CD4-positive, alpha-beta T cell (primary cell): ENCODE measurements at regions of chr14 and their contacts with region 1.

Region 1: DNA sequence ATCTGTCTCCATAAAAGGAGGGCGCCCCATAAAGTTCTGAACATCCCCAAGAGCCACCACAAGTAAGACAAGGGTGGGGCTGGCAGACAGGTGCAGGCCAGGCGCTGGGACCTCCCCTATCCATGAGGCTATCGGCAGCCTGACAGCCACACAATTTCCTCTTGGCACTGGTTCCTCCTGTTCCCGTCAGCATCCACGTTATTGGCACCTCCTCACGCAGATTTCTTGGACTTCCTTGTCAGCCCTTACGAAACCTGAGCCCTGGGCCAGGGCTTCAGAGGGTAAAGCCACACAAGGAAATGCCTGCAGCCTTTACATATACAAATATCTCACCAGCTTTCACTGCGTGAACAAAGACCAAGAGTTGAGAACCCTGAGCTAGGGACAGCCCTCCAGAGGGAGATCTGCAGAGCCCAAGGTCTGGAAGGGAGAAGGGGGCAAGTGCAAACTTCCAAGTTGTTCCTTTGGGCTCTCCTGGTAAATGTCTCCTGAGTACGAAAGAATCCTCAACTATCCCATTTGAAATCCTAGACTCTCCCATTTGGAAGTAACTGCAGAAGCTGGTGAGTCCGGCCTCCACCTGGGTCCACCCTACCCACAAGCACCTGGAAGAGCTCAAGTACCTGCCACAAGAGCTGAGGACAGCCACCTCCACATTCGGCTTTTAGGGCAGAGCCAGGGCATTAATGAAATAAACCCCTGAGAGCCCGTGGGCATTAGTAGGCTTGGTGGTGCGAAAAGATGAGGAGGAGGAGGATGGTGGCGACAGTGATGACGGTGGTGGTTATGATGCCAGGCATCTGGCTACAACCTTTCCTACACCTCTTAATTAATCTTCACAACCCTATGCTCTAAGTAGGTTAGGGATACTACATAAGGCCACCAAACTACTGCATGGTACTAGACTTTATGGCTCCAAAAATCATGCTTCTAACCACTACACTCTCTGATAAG is 5.5 kb upstream of the TC2N start:
- DNase-seq: peak; percentile 52 to 85 (median 73)
- ATAC-seq: peak; percentile 45
- H3K4me3 ChIP-seq: peak overlapping the region; percentile 53
- H3K4me3 Mint-ChIP-seq: peak overlapping the region; percentile 90
- H3K27ac ChIP-seq: peak overlapping the region; percentile 86 to 97
- H3K27ac Mint-ChIP-seq: peak overlapping the region; percentile 95
- H3K4me1 ChIP-seq: peaks cover 100% of the 10 kb centered on the region
- H3K4me1 Mint-ChIP-seq: peaks cover 95% of the 10 kb centered on the region
- H3K27me3 ChIP-seq: no peaks in the 10 kb centered on the region
- H3K27me3 Mint-ChIP-seq: no peaks in the 10 kb centered on the region
- CTCF ChIP-seq: no peak

Region 2: GRCh38 chr14:91599994-91600393 is 272.8 kb before region 1 on chr14:
- CTCF ChIA-PET with region 1: no interaction called
- POLR2A ChIA-PET with region 1: no interaction called
- intact Hi-C with region 1: no loop called
- DNase-seq: no peak
- ATAC-seq: no peak
- H3K4me3 ChIP-seq: no peak overlapping the region
- H3K4me3 Mint-ChIP-seq: no peak overlapping the region
- H3K27ac ChIP-seq: no peak overlapping the region
- H3K27ac Mint-ChIP-seq: no peak overlapping the region
- H3K4me1 ChIP-seq: no peaks in the 10 kb centered on the region
- H3K4me1 Mint-ChIP-seq: no peaks in the 10 kb centered on the region
- H3K27me3 ChIP-seq: no peaks in the 10 kb centered on the region
- H3K27me3 Mint-ChIP-seq: no peaks in the 10 kb centered on the region
- CTCF ChIP-seq: no peak

Region 3: DNA sequence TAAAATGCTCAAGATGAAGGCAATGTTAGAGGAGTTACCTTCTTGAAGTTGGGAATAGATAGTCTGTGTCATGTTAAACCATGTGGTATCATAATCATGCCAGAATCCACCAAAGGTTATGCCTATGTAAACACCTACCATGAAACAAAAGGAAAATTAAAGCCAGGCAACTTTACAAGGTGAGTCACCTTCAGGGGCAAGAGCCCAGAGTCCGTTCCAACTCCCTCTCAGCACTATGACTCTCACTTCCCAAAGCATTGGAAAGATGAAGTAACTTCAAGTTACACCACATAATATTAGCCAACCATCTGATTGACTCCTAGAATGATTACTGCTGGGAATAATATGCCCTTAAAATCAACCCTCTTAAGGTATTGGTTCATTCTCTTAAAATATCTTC is 179.4 kb before region 1 on chr14:
- CTCF ChIA-PET with region 1: no interaction called
- POLR2A ChIA-PET with region 1: no interaction called
- intact Hi-C with region 1: no loop called
- DNase-seq: peak in 2 of 14 experiments; percentile 3 to 9
- ATAC-seq: no peak
- H3K4me3 ChIP-seq: no peak overlapping the region
- H3K4me3 Mint-ChIP-seq: no peak overlapping the region
- H3K27ac ChIP-seq: no peak overlapping the region
- H3K27ac Mint-ChIP-seq: no peak overlapping the region
- H3K4me1 ChIP-seq: no peaks in the 10 kb centered on the region
- H3K4me1 Mint-ChIP-seq: no peaks in the 10 kb centered on the region
- H3K27me3 ChIP-seq: no peaks in the 10 kb centered on the region
- H3K27me3 Mint-ChIP-seq: no peaks in the 10 kb centered on the region
- CTCF ChIP-seq: no peak

Region 4: GRCh38 chr14:91826049-91826448 is 46.7 kb before region 1 on chr14:
- CTCF ChIA-PET with region 1: no interaction called
- POLR2A ChIA-PET with region 1: interaction called, 13 read pairs
- intact Hi-C with region 1: no loop called
- DNase-seq: no peak
- ATAC-seq: no peak
- H3K4me3 ChIP-seq: no peak overlapping the region
- H3K4me3 Mint-ChIP-seq: no peak overlapping the region
- H3K27ac ChIP-seq: no peak overlapping the region
- H3K27ac Mint-ChIP-seq: peak overlapping the region; percentile 62
- H3K4me1 ChIP-seq: no peaks in the 10 kb centered on the region
- H3K4me1 Mint-ChIP-seq: peaks cover 74% of the 10 kb centered on the region
- H3K27me3 ChIP-seq: no peaks in the 10 kb centered on the region
- H3K27me3 Mint-ChIP-seq: no peaks in the 10 kb centered on the region
- CTCF ChIP-seq: no peak

Region 5: GRCh38 chr14:91836119-91836881 is 36.5 kb before region 1 on chr14:
- CTCF ChIA-PET with region 1: no interaction called
- POLR2A ChIA-PET with region 1: interaction called, 42 read pairs
- intact Hi-C with region 1: loop called (anchors 1 to 2 kb)
- DNase-seq: peak; percentile 78 to 97 (median 90)
- ATAC-seq: peak; percentile 95
- H3K4me3 ChIP-seq: peak overlapping the region; percentile 63
- H3K4me3 Mint-ChIP-seq: peak overlapping the region; percentile 93
- H3K27ac ChIP-seq: peak overlapping the region; percentile 43 to 59
- H3K27ac Mint-ChIP-seq: peak overlapping the region; percentile 90
- H3K4me1 ChIP-seq: peaks cover 33% of the 10 kb centered on the region
- H3K4me1 Mint-ChIP-seq: peaks cover 83% of the 10 kb centered on the region
- H3K27me3 ChIP-seq: no peaks in the 10 kb centered on the region
- H3K27me3 Mint-ChIP-seq: no peaks in the 10 kb centered on the region
- CTCF ChIP-seq: no peak

Region 6: DNA sequence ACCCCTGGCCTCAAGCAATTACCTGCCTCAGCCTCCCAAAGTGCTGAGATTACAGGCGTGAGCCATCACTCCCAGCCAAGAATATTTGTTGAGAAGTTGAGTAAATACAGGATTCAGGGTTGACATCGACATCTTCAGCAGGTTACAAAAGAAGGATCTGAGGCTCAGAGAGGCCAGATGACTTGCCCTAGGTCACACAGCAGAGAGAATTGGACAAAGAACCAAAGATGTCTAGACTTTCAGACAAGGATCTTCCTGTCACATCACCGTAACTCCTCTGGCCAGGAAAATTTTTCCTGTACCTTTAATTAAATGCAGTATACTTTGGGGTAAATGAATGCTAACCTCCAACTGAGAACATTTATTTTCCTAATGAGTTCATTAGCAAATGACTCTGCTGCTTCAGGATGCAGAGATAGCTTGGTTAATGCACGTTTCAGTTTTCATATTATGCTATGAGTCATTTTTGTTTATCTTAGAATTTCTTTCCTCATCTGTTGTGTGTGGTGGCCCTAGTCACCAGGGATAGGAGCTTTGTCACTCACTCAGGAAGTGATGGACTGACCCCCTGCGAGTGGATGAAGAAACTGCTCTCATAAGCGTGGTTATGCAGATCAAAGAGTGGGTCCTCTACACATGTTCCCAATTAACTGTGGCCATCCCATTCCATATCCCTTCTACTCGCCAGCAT is 14.4 kb before region 1 on chr14:
- CTCF ChIA-PET with region 1: interaction called, 5 read pairs
- POLR2A ChIA-PET with region 1: interaction called, 120 read pairs
- intact Hi-C with region 1: no loop called
- DNase-seq: peak in 2 of 14 experiments; percentile 32 to 44
- ATAC-seq: peak; percentile 32
- H3K4me3 ChIP-seq: no peak overlapping the region
- H3K4me3 Mint-ChIP-seq: peak overlapping the region; percentile 54
- H3K27ac ChIP-seq: no peak overlapping the region
- H3K27ac Mint-ChIP-seq: peak overlapping the region; percentile 95
- H3K4me1 ChIP-seq: peaks cover 90% of the 10 kb centered on the region
- H3K4me1 Mint-ChIP-seq: peaks cover 96% of the 10 kb centered on the region
- H3K27me3 ChIP-seq: no peaks in the 10 kb centered on the region
- H3K27me3 Mint-ChIP-seq: no peaks in the 10 kb centered on the region
- CTCF ChIP-seq: no peak

Region 7: DNA sequence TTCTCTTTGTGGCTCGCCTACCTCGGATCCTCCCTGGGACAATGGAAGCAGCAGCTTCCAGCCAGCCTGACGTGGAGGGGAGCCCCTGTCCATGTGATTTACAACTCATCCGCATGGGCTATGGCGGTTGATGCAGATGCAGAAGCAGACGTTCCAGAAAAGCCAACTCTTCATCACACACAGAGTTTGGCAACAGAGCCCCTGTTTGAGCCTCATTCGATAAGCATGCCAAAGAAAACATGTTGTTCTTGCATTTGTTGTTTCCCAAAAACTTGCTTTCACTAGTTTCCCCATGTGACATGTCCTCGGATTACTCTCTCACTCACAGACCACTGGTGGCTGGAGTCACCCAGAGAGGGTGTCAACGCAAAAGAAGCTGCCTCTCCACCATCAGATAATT is 11.0 kb after region 1 on chr14:
- CTCF ChIA-PET with region 1: interaction called, 3 read pairs
- POLR2A ChIA-PET with region 1: interaction called, 12 read pairs
- intact Hi-C with region 1: loop called (anchors 1 to 2 kb)
- DNase-seq: no peak
- ATAC-seq: no peak
- H3K4me3 ChIP-seq: no peak overlapping the region
- H3K4me3 Mint-ChIP-seq: no peak overlapping the region
- H3K27ac ChIP-seq: no peak overlapping the region
- H3K27ac Mint-ChIP-seq: peak overlapping the region; percentile 2
- H3K4me1 ChIP-seq: peaks cover 23% of the 10 kb centered on the region
- H3K4me1 Mint-ChIP-seq: peaks cover 43% of the 10 kb centered on the region
- H3K27me3 ChIP-seq: no peaks in the 10 kb centered on the region
- H3K27me3 Mint-ChIP-seq: no peaks in the 10 kb centered on the region
- CTCF ChIP-seq: no peak

Region 8: DNA sequence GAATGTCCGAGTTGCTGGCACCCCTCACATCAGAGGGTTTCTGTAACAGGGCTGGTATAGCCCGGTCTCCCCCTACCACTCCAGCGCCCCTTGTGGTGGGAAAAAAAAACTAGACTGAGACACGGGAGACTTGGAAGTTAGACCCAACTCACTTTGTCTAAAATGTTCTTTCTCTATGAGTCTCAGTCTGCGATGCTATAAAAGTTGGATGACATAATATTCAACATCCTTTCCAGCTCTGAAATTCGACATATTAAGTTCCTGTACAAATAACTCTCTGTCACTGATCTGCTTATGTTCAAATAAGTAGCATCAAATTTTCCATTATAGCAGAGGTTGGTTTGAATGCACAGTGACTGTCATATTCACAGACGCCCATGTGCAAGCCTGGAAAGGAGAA is 20.2 kb after region 1 on chr14:
- CTCF ChIA-PET with region 1: interaction called, 7 read pairs
- POLR2A ChIA-PET with region 1: interaction called, 45 read pairs
- intact Hi-C with region 1: loop called in 1 of 2 experiments (anchors 2 kb)
- DNase-seq: peak in 7 of 14 experiments; percentile 18 to 67 (median 35)
- ATAC-seq: peak; percentile 51
- H3K4me3 ChIP-seq: no peak overlapping the region
- H3K4me3 Mint-ChIP-seq: no peak overlapping the region
- H3K27ac ChIP-seq: no peak overlapping the region
- H3K27ac Mint-ChIP-seq: peak overlapping the region; percentile 48
- H3K4me1 ChIP-seq: peaks cover 53% of the 10 kb centered on the region
- H3K4me1 Mint-ChIP-seq: peaks cover 65% of the 10 kb centered on the region
- H3K27me3 ChIP-seq: no peaks in the 10 kb centered on the region
- H3K27me3 Mint-ChIP-seq: no peaks in the 10 kb centered on the region
- CTCF ChIP-seq: no peak

Region 9: GRCh38 chr14:92039719-92040430 is 167.1 kb after region 1 on chr14 and contains the start of gene TRIP11:
- CTCF ChIA-PET with region 1: no interaction called
- POLR2A ChIA-PET with region 1: interaction called, 12 read pairs
- intact Hi-C with region 1: no loop called
- DNase-seq: peak; percentile 88 to 97 (median 94)
- ATAC-seq: peak; percentile 86
- H3K4me3 ChIP-seq: peak within 1 kb of the TSS; percentile 72
- H3K4me3 Mint-ChIP-seq: peak within 1 kb of the TSS; percentile 99
- H3K27ac ChIP-seq: peak within 1 kb of the TSS; percentile 90 to 92
- H3K27ac Mint-ChIP-seq: no peak within 1 kb of the TSS
- H3K4me1 ChIP-seq: peaks cover 38% of the 10 kb centered on the region
- H3K4me1 Mint-ChIP-seq: peaks cover 53% of the 10 kb centered on the region
- H3K27me3 ChIP-seq: no peaks in the 10 kb centered on the region
- H3K27me3 Mint-ChIP-seq: no peaks in the 10 kb centered on the region
- CTCF ChIP-seq: no peak
- total RNA-seq, gene TRIP11: 30.0 to 31.2 TPM